ENCODE measurements at regions of chr22 and their contacts with region 1.

Region 1: GRCh38 chr22:19432133-19432851 is at the start of gene MRPL40:
- DNase-seq: peak; percentile 75 to 92 (median 82)
- ATAC-seq: peak; percentile 86 to 89
- H3K4me3 Mint-ChIP-seq: peak within 1 kb of the TSS; percentile 87 to 95 (median 91)
- H3K27ac Mint-ChIP-seq: peak within 1 kb of the TSS; percentile 76 to 96 (median 93)
- H3K4me1 Mint-ChIP-seq: peaks cover 15 to 59% (median 38%) of the 10 kb centered on the region in 4 donors
- H3K27me3 Mint-ChIP-seq: no peaks in the 10 kb centered on the region
- polyA plus RNA-seq, gene MRPL40: 69.5 to 80.5 (median 78.2) TPM

Region 2: DNA sequence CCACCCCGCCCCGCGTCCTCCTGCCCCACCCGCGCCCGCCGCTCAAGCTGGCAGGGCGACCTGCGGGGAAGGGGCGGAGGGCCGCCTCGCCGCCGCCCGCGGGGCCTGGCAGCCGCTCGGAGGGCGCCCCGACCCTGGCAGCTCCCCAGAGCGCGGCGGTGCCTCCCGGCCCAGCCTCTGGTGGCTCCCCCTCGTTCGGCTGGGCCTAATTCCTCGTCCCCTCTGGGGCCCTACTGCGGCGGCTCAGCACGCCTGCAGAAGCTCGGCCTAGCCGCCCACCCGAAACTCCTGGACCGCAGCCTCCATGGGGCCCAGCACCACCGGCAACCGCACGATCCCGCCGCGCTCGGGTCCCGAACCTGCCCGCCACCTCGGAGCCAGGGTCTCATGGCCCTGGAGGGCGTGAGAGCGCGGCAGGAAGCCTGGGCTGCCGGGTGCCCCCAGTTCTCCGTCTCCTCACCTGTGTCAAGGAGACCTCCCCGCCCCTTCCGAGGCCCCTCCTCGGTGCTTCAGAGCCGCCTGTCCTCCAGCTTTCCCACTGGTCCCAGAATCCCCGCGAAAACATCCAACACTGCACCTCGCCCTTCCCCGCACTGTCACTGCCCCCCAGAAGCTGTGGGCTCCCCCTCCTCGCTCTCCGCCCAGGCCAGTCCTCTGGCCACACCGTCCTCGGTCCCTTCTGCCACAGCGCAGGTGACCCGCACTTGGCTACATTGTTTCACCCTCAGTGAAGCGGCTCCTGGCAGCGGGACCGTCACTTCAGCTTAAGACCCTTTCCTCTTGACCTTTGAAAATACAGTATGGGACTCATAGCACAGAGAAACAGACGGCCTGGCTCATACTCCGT is 281.6 kb before region 1 on chr22:
- POLR2A ChIA-PET with region 1: no interaction called
- DNase-seq: no peak
- ATAC-seq: no peak
- H3K4me3 Mint-ChIP-seq: peak overlapping the region; percentile 42 to 92 (median 73)
- H3K27ac Mint-ChIP-seq: no peak overlapping the region
- H3K4me1 Mint-ChIP-seq: peaks cover 7 to 15% (median 10%) of the 10 kb centered on the region in 4 donors
- H3K27me3 Mint-ChIP-seq: peaks cover 21 to 59% (median 40%) of the 10 kb centered on the region in 5 donors

Region 3: DNA sequence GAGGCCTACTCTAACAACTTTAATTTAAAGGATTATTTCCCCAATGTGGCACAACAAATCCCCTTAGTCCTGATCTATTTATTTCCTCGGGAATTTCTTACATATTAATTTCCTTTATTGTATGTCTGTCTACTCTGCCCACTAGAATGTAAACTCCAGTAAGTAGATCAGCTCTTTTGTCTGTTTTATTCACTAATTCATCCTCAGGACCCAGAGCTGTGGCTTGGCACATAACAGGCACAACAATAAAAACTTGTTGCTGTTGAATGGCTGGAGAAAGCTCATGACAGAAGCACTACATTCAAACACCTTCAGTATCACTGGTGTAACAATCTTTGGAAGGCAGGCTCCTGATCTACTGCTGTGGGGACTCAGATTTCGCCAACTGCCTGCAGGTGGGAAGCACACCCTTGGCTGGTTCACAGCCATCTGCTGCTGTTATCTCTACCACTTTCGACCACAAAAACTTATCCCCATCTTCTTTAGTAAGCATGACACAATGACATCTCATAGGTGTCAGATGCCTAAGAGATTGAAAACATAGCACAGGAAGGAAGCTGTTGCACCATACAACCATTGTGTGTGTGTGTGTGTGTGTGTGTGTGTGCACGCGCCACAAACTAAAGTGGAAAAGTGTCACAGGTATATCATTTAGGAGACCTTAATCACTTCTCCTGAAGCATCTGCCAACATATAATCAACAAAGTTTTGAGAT is 12.7 kb before region 1 on chr22:
- POLR2A ChIA-PET with region 1: interaction called, 11 read pairs
- DNase-seq: peak in 4 of 10 donors; percentile 19 to 48 (median 44)
- ATAC-seq: peak; percentile 70 to 95
- H3K4me3 Mint-ChIP-seq: peak overlapping the region; percentile 1 to 64 (median 34)
- H3K27ac Mint-ChIP-seq: peak overlapping the region; percentile 85 to 95 (median 90)
- H3K4me1 Mint-ChIP-seq: peaks cover 44 to 74% (median 67%) of the 10 kb centered on the region in 4 donors
- H3K27me3 Mint-ChIP-seq: no peaks in the 10 kb centered on the region

Region 4: GRCh38 chr22:19447388-19448075 is 15.2 kb after region 1 on chr22 and contains the start of gene C22orf39:
- POLR2A ChIA-PET with region 1: interaction called, 105 read pairs
- DNase-seq: peak; percentile 77 to 94 (median 88)
- ATAC-seq: peak; percentile 91 to 92
- H3K4me3 Mint-ChIP-seq: peak within 1 kb of the TSS; percentile 88 to 98 (median 94)
- H3K27ac Mint-ChIP-seq: peak within 1 kb of the TSS; percentile 87 to 99 (median 96)
- H3K4me1 Mint-ChIP-seq: peaks cover 18 to 54% (median 45%) of the 10 kb centered on the region in 4 donors
- H3K27me3 Mint-ChIP-seq: no peaks in the 10 kb centered on the region
- polyA plus RNA-seq, gene C22orf39: 51.9 to 58.7 (median 58.0) TPM

Region 5: GRCh38 chr22:19479357-19480172 is 47.3 kb after region 1 on chr22 and contains the start of gene CDC45:
- POLR2A ChIA-PET with region 1: interaction called, 29 read pairs
- DNase-seq: peak; percentile 79 to 98 (median 93)
- ATAC-seq: peak; percentile 91 to 92
- H3K4me3 Mint-ChIP-seq: peak within 1 kb of the TSS; percentile 92 to 98 (median 96)
- H3K27ac Mint-ChIP-seq: peak within 1 kb of the TSS; percentile 98 to 100 (median 100)
- H3K4me1 Mint-ChIP-seq: peaks cover 19 to 33% (median 33%) of the 10 kb centered on the region in 4 donors
- H3K27me3 Mint-ChIP-seq: no peaks in the 10 kb centered on the region
- polyA plus RNA-seq, gene CDC45: 1.2 to 2.7 TPM in 2 of 3 donors, not detected in the other

Region 6: GRCh38 chr22:19705181-19705934 is 273.1 kb after region 1 on chr22:
- POLR2A ChIA-PET with region 1: no interaction called
- DNase-seq: no peak
- ATAC-seq: no peak
- H3K4me3 Mint-ChIP-seq: no peak overlapping the region
- H3K27ac Mint-ChIP-seq: peak overlapping the region in 2 of 10 donors; percentile 5 to 43
- H3K4me1 Mint-ChIP-seq: no peaks in the 10 kb centered on the region
- H3K27me3 Mint-ChIP-seq: peaks cover 0 to 6% (median 1%) of the 10 kb centered on the region in 5 donors